ENCODE measurements at regions of chr2 and their contacts with region 1.

Region 1: DNA sequence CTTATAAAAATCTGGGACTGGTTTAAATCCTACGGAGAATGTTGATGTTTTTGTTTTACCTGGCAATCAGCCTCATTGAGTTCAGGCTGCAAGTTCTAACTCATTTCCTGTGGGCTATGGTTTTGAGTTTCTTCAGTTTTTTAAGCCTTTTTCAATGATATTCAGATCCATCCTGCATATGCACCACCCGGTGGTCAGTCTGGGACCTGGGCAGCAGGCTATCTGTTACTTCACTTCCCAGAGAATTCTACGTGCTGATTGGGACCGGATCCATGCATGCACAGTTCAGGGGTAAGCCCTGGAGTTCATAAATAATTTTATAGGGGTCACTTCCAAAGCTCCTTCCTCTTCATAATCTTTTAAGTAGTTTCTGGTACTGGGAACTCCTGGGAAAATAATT is 339.2 kb upstream of the HNRNPA3 start:
- DNase-seq: no peak
- ATAC-seq: no peak
- H3K4me3 Mint-ChIP-seq: no peak overlapping the region
- H3K27ac Mint-ChIP-seq: peak overlapping the region in 1 of 10 donors; percentile 35
- H3K4me1 Mint-ChIP-seq: peaks cover 6 to 16% (median 12%) of the 10 kb centered on the region in 4 donors
- H3K27me3 Mint-ChIP-seq: no peaks in the 10 kb centered on the region

Region 2: DNA sequence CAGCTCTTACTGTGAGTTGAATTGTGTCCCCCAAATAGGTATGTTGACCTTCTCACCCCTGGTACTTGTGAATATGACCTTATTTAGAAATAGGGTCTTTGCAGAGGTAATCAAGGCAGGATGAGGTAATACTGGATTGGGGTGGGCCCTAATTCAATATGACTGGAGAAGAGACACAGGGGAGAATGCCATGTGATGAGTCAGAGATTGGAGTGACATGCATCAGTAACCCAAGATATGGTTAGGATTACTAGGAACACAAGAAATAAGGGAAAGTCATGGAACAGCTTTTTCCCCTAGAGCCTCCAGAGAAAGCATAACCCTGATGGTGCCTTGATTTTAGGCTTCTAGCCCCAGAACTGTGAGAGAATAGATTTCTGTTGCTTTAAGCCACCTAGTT is 1654.9 kb before region 1 on chr2:
- POLR2A ChIA-PET with region 1: interaction called, 13 read pairs
- DNase-seq: no peak
- ATAC-seq: no peak
- H3K4me3 Mint-ChIP-seq: no peak overlapping the region
- H3K27ac Mint-ChIP-seq: no peak overlapping the region
- H3K4me1 Mint-ChIP-seq: no peaks in the 10 kb centered on the region
- H3K27me3 Mint-ChIP-seq: peaks cover 14 to 31% (median 25%) of the 10 kb centered on the region in 5 donors

Region 3: GRCh38 chr2:176924909-176925534 is 51.6 kb after region 1 on chr2:
- POLR2A ChIA-PET with region 1: no interaction called
- DNase-seq: no peak
- ATAC-seq: no peak
- H3K4me3 Mint-ChIP-seq: no peak overlapping the region
- H3K27ac Mint-ChIP-seq: peak overlapping the region in 1 of 10 donors; percentile 61
- H3K4me1 Mint-ChIP-seq: peaks cover 0 to 1% (median 0%) of the 10 kb centered on the region in 4 donors
- H3K27me3 Mint-ChIP-seq: no peaks in the 10 kb centered on the region

Measured in naive thymus-derived CD8-positive, alpha-beta T cell (primary cell).